ENCODE measurements at regions of chr1 and their contacts with region 1.

Region 1: DNA sequence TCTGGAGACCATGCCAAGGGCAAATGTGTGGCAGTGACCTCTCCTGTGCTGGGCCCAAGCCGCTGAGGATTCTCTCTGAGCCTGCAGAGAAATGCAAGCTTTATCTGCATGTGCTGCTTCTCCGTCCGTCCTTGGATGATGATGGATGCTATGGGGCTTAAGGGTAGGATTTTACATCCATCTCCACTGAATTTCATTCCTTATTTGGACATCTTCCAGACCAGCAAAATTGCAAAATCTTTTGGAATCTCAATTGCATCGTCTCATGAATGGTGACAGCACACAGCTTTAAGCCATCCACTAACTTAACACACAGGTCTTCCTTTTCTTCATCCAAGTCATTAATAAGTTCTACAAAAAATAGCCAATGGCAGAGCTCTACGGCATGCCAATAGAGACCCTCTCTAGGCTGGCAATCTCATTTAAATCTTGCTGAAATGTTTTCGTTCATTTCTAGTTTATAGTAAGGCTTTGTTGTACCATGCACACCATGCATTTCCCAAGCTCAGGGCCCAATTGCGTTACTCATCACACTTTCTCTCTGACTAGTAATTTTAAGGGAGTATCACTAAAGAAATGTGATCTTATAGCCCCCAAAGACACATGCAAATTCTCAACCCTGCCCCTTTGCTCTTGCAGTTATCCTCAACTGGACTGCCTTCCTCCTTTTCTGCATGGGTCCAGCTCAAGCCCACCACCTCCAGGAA is 11.1 kb downstream of the BATF3 start:
- DNase-seq: no peak
- ATAC-seq: no peak
- H3K4me3 ChIP-seq: no peak overlapping the region
- H3K27ac ChIP-seq: no peak overlapping the region
- H3K4me1 ChIP-seq: peaks cover 0 to 29% (median 0%) of the 10 kb centered on the region in 12 donors
- H3K27me3 ChIP-seq: no peaks in the 10 kb centered on the region
- CTCF ChIP-seq: no peak
- POLR2A ChIP-seq: no peak

Region 2: GRCh38 chr1:212959266-212960220 is 271.0 kb after region 1 on chr1:
- intact Hi-C with region 1: loop called in 1 of 10 experiments (anchors 5 kb)
- DNase-seq: no peak
- ATAC-seq: no peak
- H3K4me3 ChIP-seq: no peak overlapping the region
- H3K27ac ChIP-seq: no peak overlapping the region
- H3K4me1 ChIP-seq: no peaks in the 10 kb centered on the region
- H3K27me3 ChIP-seq: no peaks in the 10 kb centered on the region
- CTCF ChIP-seq: no peak
- POLR2A ChIP-seq: no peak